Endothelial cell of umbilical vein (primary cell): ENCODE measurements at regions of chr12 and their contacts with region 1.

Region 1: GRCh38 chr12:3680896-3681594 is 71.9 kb downstream of the CRACR2A start:
- DNase-seq: peak; percentile 61
- H3K4me3 ChIP-seq: no peak overlapping the region
- H3K27ac ChIP-seq: no peak overlapping the region
- H3K4me1 ChIP-seq: no peaks in the 10 kb centered on the region
- H3K27me3 ChIP-seq: no peaks in the 10 kb centered on the region
- CTCF ChIP-seq: peak in 1 of 2 donors; percentile 66
- POLR2A ChIP-seq: no peak

Region 2: DNA sequence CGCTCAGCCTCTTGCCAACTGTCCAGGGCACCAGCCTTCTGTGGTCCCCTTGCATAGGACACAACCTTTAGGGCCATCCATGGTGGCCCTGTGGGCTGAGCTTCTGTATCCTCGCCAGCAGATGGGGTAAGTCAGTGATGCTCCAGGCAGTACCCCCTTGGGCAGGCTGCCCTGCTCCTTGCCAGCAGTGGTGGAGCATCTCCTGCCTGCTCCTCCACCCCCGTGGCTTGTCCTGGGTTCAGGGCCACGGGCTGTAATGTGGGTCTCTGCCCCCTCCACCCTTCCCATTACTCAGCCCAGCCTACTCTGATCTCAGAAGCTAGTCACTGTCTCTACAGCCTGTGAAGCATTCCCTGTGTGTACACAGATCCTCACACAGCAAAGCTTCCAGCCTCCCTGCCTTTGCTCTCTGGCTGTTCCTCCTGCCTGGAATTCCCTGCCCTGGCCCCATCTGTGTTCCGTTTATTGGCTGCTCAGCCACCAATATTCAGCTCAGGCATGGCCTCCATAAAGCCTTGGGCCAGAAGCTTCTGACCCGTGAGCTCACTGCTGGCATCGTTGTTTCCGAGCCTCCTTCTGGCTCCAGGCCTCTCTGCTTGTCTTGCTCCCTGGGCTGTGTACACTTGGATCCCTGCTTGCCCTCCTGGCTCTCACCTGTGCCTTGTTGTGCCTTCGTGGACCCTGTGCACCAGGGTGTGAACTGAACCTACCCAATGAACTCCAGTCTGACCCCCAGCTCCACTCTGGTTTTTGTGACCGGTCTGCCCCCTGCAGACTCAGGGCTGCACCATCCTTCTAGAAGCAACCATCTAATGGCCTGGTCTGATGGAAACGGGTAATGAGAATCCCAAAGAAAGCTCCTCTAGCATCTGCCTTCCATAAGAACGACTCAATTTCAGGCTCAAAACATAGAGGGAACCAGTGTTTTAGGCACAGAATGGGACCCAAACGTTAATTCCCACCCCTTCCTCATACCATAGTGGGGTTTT is 367.1 kb before region 1 on chr12:
- CTCF ChIA-PET with region 1: interaction called, 19 read pairs
- POLR2A ChIA-PET with region 1: no interaction called
- dilution Hi-C with region 1: no loop called
- intact Hi-C with region 1: no loop called
- DNase-seq: peak; percentile 20
- H3K4me3 ChIP-seq: no peak overlapping the region
- H3K27ac ChIP-seq: no peak overlapping the region
- H3K4me1 ChIP-seq: peaks cover 4% of the 10 kb centered on the region
- H3K27me3 ChIP-seq: peaks cover 0 to 1% of the 10 kb centered on the region in 2 experiments
- CTCF ChIP-seq: peak; percentile 10 to 62
- POLR2A ChIP-seq: no peak

Region 3: GRCh38 chr12:3342056-3342455 is 339.0 kb before region 1 on chr12:
- CTCF ChIA-PET with region 1: interaction called, 20 read pairs
- POLR2A ChIA-PET with region 1: no interaction called
- dilution Hi-C with region 1: no loop called
- intact Hi-C with region 1: loop called (anchors 1 kb)
- DNase-seq: peak; percentile 37
- H3K4me3 ChIP-seq: no peak overlapping the region
- H3K27ac ChIP-seq: no peak overlapping the region
- H3K4me1 ChIP-seq: no peaks in the 10 kb centered on the region
- H3K27me3 ChIP-seq: no peaks in the 10 kb centered on the region
- CTCF ChIP-seq: peak; percentile 23 to 65
- POLR2A ChIP-seq: no peak